Psoas muscle (tissue), 8 donors: ENCODE measurements at regions of chr14 and their contacts with region 1.

Region 1: DNA sequence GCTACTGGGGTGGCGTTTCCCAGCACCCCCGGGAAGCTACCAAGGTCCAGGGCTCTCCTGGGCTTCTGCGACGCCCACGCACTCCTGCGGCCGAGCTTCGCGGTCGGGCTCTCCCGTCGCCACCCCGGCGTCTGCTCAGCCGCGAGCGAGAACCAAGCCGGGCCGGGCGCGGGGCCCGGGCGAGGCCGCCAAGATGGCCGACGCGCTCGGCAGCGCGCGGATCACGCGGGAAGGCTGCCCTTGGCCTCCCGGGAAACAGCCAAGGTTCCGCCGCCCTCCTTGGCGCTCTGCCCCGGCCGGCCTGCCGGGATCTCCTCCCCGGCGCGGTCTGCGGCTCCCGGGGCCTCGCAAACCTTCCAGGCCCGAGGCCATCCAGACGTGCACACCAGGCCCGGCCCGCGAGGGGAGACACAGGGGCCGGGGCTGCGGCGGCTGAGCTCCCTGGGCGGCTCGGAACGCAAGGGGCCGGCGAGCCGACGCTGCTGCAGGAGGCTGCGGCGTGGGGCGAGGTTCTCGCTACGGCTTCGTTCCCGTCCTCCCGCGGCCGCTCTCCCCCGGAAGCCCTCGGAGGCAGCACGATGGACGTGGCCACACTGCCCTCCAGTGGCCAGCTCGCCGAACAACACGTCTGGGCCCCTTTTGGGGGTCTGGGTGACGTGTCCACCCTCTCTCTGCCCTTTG is 23.5 kb upstream of the ZFP36L1 start:
- DNase-seq: peak; percentile 91 to 95
- ATAC-seq: peak; percentile 91 to 93 (median 93)
- H3K4me3 ChIP-seq: peak overlapping the region; percentile 72
- H3K27ac ChIP-seq: peak overlapping the region; percentile 99
- H3K4me1 ChIP-seq: peaks cover 23% of the 10 kb centered on the region
- H3K27me3 ChIP-seq: no peaks in the 10 kb centered on the region
- CTCF ChIP-seq: peak; percentile 98

Region 2: GRCh38 chr14:67837011-67837624 is 979.3 kb before region 1 on chr14:
- intact Hi-C with region 1: loop called in 1 of 2 experiments (anchors 2 kb)
- DNase-seq: no peak
- ATAC-seq: peak in 2 of 4 donors; percentile 38 to 46
- H3K4me3 ChIP-seq: no peak overlapping the region
- H3K27ac ChIP-seq: no peak overlapping the region
- H3K4me1 ChIP-seq: no peaks in the 10 kb centered on the region
- H3K27me3 ChIP-seq: no peaks in the 10 kb centered on the region
- CTCF ChIP-seq: peak; percentile 42

Region 3: DNA sequence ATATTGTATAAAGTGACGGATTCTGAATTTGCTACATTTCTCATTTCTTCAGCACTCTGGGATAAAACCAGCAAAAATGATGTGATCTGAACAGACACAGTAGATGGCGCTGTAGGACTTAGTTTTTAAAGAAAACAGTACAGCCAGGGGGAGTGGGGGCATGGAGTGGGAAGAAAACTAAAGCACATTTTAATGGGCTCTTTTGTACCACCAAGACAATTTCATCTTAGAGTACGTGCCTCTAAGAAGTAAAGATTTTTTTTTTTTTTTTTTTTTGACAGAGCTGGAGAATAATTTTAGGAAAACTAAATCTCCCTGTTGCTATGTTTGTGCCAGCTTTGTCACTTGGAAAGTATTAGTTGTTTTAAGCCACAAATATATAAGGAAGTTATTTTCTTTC is 872.5 kb before region 1 on chr14:
- intact Hi-C with region 1: loop called in 1 of 2 experiments (anchors 2 kb)
- DNase-seq: no peak
- ATAC-seq: peak; percentile 78 to 89 (median 84)
- H3K4me3 ChIP-seq: no peak overlapping the region
- H3K27ac ChIP-seq: no peak overlapping the region
- H3K4me1 ChIP-seq: peaks cover 41% of the 10 kb centered on the region
- H3K27me3 ChIP-seq: no peaks in the 10 kb centered on the region
- CTCF ChIP-seq: peak; percentile 75

Region 4: DNA sequence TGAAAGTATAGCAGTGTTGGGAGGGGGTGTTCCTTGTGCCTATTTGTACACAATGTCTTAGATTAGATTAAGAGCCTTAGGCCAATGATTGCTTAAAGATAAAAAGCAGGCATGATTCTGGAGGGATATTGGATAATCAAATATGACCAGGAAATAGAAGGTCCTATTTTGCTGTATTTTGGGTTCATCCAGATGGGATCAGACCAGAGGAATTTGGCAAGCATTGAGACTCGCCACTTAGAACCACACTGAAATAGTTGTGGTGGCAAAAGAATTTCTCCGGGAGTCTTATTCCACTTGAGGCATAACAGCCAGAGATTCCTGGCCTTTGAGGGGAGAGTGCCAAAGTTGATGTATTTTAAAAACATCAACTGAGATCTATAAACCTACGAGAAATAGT is 669.6 kb before region 1 on chr14:
- intact Hi-C with region 1: loop called in 1 of 2 experiments (anchors 5 kb)
- DNase-seq: no peak
- ATAC-seq: peak; percentile 44 to 82 (median 53)
- H3K4me3 ChIP-seq: no peak overlapping the region
- H3K27ac ChIP-seq: peak overlapping the region; percentile 85
- H3K4me1 ChIP-seq: peaks cover 56% of the 10 kb centered on the region
- H3K27me3 ChIP-seq: no peaks in the 10 kb centered on the region
- CTCF ChIP-seq: no peak

Region 5: DNA sequence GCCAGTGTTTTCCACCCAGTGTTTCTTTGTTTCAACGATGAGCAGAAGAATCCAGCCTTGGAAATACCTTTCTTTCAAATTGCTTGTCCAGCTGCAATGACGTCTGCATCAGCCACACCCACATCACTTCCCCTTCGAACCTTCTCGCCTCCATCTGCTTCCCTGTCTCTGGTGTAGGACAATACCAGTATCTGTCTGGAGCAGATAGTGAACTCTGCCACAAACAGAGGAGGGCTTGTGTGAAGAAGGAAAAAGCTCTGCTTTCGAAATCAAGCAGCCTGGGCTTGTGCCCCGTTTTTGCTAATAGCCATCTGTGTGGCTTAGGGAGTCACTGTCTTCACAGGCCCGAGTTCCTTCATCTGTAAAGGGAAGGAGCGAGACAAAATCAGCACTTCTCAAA is 438.9 kb before region 1 on chr14:
- intact Hi-C with region 1: loop called in 1 of 2 experiments (anchors 10 kb)
- DNase-seq: peak; percentile 41 to 60
- ATAC-seq: peak in 3 of 4 donors; percentile 22 to 48 (median 45)
- H3K4me3 ChIP-seq: no peak overlapping the region
- H3K27ac ChIP-seq: peak overlapping the region; percentile 27
- H3K4me1 ChIP-seq: peaks cover 27% of the 10 kb centered on the region
- H3K27me3 ChIP-seq: no peaks in the 10 kb centered on the region
- CTCF ChIP-seq: no peak

Region 6: GRCh38 chr14:68451696-68452373 is 364.6 kb before region 1 on chr14:
- intact Hi-C with region 1: no loop called
- DNase-seq: peak; percentile 36 to 38
- ATAC-seq: peak; percentile 62 to 85 (median 75)
- H3K4me3 ChIP-seq: no peak overlapping the region
- H3K27ac ChIP-seq: peak overlapping the region; percentile 30
- H3K4me1 ChIP-seq: no peaks in the 10 kb centered on the region
- H3K27me3 ChIP-seq: no peaks in the 10 kb centered on the region
- CTCF ChIP-seq: no peak